Cardiac septum (tissue), 1 donor: ENCODE measurements at regions of chr18 and their contacts with region 1.

Region 1: DNA sequence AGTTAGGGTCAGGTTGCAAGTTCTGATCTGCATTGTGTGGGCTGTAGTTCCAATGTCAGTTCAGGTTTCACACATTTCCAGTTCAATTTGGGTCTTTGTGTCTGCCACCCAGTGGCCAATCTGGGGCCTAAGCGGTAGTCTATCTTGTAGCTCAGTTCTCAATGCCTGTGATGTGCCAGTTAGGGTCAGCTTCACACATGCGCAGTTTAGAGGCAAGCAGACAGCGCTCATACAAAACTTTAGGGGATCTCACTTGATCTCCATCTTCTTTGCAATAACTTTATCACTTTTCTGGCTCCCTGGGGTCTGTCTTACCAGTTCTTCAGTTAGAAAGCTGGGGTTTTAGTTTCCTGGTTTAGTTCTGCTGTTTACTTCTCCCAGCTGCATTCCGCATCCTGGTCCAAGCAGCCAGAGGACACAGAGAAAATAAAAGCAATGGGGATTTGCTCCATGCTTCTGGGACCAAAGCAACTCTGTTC is 11.0 kb upstream of the ZNF24 start:
- DNase-seq: peak; percentile 80

Region 2: GRCh38 chr18:35029770-35030169 is 325.4 kb before region 1 on chr18:
- intact Hi-C with region 1: loop called (anchors 10 kb)
- DNase-seq: no peak

Region 3: DNA sequence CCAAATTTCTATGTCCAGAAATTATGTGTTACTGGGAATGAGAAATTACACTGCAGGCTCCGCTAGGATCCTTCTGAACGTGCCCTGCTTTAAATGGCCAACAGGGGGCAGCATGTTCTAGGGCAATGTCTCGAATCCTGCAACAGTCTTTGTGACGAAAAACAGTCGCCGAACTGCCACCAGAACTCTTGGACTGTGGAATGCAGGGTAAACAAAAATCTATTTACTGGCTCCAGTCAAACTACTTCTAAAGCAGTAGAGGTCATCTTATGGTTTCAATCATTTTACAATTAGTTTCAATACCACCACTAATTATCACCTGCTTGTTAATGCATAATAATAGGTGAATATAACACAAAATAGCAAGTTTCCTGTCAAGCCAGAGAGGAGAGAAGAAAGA is 124.1 kb before region 1 on chr18:
- intact Hi-C with region 1: loop called (anchors 5 kb)
- DNase-seq: peak; percentile 87